ENCODE measurements at regions of chr13 and their contacts with region 1.

Region 1: DNA sequence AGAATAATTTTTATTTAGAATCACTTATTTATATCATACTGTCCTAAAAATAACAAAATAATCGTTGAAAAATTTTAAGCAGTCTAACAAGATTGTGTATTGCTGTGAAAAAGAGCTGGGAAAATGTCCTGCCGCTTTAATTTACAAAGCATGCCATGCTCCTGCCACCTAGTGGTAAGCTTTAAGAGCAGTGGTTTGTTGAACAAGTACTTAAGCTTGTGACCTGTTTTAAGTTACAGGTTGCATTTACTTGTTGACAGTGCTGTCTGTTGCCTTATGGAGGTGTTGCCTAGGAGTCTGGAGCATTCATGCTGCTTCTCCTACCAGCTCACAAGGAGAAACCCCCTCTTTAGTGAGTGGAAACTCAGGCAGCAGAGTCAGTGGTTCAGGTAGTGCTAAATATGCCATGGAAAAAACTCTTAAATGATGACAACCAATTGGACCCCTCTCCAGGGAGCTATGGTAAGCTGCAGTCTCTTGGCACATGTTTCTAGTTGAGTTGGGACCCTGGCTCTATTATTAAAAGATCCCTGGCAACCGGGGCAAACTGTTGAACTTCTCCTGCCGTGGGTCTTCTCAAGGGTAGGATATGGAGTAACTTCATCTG is 68.4 kb downstream of the SPATA13 start:
- DNase-seq: peak; percentile 69
- ATAC-seq: peak; percentile 66
- H3K4me3 Mint-ChIP-seq: no peak overlapping the region
- H3K27ac Mint-ChIP-seq: no peak overlapping the region
- H3K4me1 Mint-ChIP-seq: peaks cover 38% of the 10 kb centered on the region
- H3K27me3 Mint-ChIP-seq: no peaks in the 10 kb centered on the region

Region 2: DNA sequence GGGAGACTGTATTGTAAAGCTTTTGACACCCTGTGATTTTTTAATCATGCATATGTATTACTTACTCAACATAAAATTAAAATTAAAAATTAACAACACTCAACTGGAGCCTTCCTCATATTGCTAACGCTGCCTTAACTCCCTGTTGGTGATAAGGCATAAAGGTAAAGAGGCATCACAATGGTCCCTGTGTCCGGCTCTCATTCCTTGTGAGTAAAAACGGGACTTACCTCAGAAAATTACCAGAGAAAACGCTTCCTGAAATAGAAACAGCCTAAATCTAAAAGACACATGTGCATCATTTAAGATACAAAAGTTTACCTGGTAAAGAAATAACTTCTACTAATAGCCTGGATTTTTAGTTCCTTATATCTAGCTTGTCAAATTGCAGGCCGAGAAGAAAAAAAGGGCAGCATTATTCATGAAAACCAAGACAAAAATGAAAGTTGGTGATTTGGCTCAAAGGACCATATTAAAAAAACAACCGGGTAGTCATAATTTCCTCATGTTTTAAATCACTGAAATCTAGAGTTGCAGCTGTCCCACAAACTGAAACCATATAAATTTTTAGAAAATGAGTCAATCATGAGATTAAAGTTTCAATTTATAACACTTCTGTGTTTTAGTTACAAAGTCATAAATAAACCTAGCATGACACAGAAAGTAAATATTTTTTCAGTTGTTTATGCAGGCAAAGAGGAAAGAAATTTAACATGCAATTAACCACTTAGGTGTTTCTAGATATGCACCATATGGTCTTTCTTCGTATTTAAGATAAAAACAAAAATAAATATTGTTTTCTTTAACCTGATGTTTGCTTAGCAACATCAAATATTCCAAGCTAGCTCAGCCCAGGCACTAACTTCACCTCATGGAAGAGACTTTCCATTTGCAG is 434.4 kb before region 1 on chr13:
- CTCF ChIA-PET with region 1: no interaction called
- POLR2A ChIA-PET with region 1: no interaction called
- DNase-seq: no peak
- ATAC-seq: no peak
- H3K4me3 Mint-ChIP-seq: no peak overlapping the region
- H3K27ac Mint-ChIP-seq: no peak overlapping the region
- H3K4me1 Mint-ChIP-seq: no peaks in the 10 kb centered on the region
- H3K27me3 Mint-ChIP-seq: no peaks in the 10 kb centered on the region

Region 3: GRCh38 chr13:23856008-23856750 is 372.8 kb before region 1 on chr13:
- CTCF ChIA-PET with region 1: no interaction called
- POLR2A ChIA-PET with region 1: no interaction called
- DNase-seq: no peak
- ATAC-seq: no peak
- H3K4me3 Mint-ChIP-seq: no peak overlapping the region
- H3K27ac Mint-ChIP-seq: no peak overlapping the region
- H3K4me1 Mint-ChIP-seq: peaks cover 4% of the 10 kb centered on the region
- H3K27me3 Mint-ChIP-seq: no peaks in the 10 kb centered on the region

Region 4: DNA sequence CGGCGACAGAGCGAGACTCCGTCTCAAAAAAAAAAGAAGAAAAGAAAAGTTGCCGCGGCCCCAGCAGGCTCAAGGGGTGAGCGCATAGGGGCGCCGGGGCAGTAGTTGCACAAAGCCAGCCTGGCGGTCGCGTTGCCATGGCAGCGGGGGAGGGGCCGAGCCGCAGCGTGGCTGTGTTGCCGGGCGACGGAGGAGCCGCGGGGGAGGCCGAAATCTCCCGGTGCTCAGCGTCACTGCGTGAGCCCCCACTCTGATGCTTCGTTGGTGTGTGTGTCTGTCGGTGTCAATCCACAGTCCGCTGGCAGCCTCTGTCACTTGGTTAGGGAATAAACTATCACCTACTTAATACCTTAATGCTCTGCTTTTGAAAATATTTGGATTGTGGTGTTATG is 248.8 kb before region 1 on chr13:
- CTCF ChIA-PET with region 1: interaction called, 12 read pairs
- POLR2A ChIA-PET with region 1: interaction called, 3 read pairs
- DNase-seq: peak; percentile 92
- ATAC-seq: peak; percentile 91
- H3K4me3 Mint-ChIP-seq: peak overlapping the region; percentile 77
- H3K27ac Mint-ChIP-seq: peak overlapping the region; percentile 68
- H3K4me1 Mint-ChIP-seq: peaks cover 17% of the 10 kb centered on the region
- H3K27me3 Mint-ChIP-seq: peaks cover 30% of the 10 kb centered on the region

Region 5: GRCh38 chr13:24053519-24054251 is 175.3 kb before region 1 on chr13:
- CTCF ChIA-PET with region 1: interaction called, 52 read pairs
- POLR2A ChIA-PET with region 1: no interaction called
- DNase-seq: peak; percentile 78
- ATAC-seq: peak; percentile 95
- H3K4me3 Mint-ChIP-seq: no peak overlapping the region
- H3K27ac Mint-ChIP-seq: no peak overlapping the region
- H3K4me1 Mint-ChIP-seq: peaks cover 7% of the 10 kb centered on the region
- H3K27me3 Mint-ChIP-seq: peaks cover 4% of the 10 kb centered on the region

Region 6: GRCh38 chr13:24160454-24161009 is 68.4 kb before region 1 on chr13 and contains the start of gene SPATA13:
- CTCF ChIA-PET with region 1: interaction called, 12 read pairs
- POLR2A ChIA-PET with region 1: no interaction called
- DNase-seq: peak; percentile 94
- ATAC-seq: peak; percentile 92
- H3K4me3 Mint-ChIP-seq: peak within 1 kb of the TSS; percentile 88
- H3K27ac Mint-ChIP-seq: peak within 1 kb of the TSS; percentile 82
- H3K4me1 Mint-ChIP-seq: peaks cover 40% of the 10 kb centered on the region
- H3K27me3 Mint-ChIP-seq: peaks cover 3% of the 10 kb centered on the region
- total RNA-seq, gene SPATA13: 57.4 to 63.2 TPM

Region 7: DNA sequence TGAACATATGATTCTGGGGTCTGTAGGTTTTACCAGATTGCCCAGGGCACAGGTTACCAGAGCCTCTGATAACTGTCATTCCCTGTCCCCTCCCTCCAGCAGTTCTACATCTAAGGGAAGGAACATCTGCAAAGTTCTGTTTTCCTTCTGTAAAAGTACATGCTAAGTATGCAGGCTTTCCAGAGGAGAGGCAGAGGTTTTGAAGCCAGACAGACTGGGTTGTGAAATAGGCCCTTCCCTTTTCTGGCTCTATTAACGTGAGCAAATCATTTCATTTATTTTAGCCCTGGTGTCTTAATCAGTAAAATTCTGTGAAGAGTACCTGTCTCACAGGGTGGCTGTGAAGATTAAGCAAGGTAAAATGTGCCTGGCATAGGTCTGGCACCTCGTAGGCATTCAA is 14.3 kb after region 1 on chr13:
- CTCF ChIA-PET with region 1: interaction called, 16 read pairs
- POLR2A ChIA-PET with region 1: interaction called, 3 read pairs
- DNase-seq: no peak
- ATAC-seq: no peak
- H3K4me3 Mint-ChIP-seq: no peak overlapping the region
- H3K27ac Mint-ChIP-seq: no peak overlapping the region
- H3K4me1 Mint-ChIP-seq: peaks cover 5% of the 10 kb centered on the region
- H3K27me3 Mint-ChIP-seq: no peaks in the 10 kb centered on the region

Region 8: DNA sequence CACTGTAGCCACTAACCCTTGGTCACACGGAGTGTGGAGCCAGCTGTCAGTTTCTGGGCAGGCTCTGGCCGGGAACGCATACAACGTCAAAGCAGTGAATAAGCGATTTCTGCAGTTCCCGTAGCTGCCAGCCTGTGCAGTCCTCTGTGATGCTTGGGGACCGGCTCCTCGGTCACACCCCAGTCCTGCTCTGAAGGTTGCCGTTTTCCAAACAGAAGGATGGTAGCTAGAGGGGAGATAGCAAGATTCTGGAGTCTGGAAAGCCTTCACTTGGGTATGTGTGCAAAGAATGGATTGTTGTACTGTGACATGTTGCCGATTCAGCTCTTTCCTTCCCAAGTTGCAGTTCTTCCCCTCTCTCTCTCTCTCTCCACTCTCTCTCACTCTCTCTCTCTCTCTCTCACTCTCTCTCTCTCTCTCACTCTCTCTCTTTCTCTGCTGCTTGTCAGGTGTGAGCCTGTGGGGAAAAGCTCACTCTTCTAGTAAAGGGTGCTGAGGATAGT is 41.7 kb after region 1 on chr13:
- CTCF ChIA-PET with region 1: interaction called, 19 read pairs
- POLR2A ChIA-PET with region 1: interaction called, 5 read pairs
- DNase-seq: peak; percentile 74
- ATAC-seq: peak; percentile 52
- H3K4me3 Mint-ChIP-seq: peak overlapping the region; percentile 84
- H3K27ac Mint-ChIP-seq: peak overlapping the region; percentile 96
- H3K4me1 Mint-ChIP-seq: peaks cover 88% of the 10 kb centered on the region
- H3K27me3 Mint-ChIP-seq: no peaks in the 10 kb centered on the region

Region 9: DNA sequence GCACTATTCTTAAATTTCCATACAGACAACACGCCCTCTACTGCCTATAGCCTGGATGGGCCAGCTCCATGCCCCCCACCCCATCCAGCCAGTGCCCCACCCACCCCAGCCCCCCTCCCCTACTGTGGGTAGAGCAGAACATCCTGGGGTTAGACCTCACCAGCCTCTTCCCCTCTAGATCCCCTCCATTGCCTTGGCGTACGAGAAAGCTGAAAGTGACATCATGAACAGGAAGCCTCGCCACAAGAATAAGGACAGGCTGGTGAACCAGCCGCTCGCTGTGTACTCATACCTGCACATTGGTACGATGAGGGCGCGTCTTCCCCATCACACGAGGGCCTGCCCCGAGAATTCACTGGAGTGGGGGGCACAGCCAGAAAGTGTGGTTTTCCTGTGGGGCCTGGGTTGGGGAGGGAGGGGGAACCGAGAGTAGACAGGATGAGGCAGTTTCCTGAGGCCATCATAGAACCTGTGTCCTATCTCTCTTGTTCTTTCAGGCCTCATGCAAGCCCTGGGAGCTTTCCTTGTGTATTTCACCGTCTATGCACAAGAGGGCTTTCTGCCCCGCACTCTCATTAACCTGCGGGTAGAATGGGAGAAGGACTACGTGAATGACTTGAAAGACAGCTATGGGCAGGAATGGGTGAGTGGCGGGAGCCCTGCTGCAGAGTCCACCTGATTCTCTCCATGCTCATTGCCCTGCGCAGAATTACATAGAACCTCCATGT is 480.4 kb after region 1 on chr13:
- CTCF ChIA-PET with region 1: no interaction called
- POLR2A ChIA-PET with region 1: no interaction called
- DNase-seq: peak; percentile 86
- ATAC-seq: peak; percentile 97
- H3K4me3 Mint-ChIP-seq: peak overlapping the region; percentile 32
- H3K27ac Mint-ChIP-seq: peak overlapping the region; percentile 85
- H3K4me1 Mint-ChIP-seq: peaks cover 46% of the 10 kb centered on the region
- H3K27me3 Mint-ChIP-seq: peaks cover 10% of the 10 kb centered on the region

Measured in activated CD8-positive, alpha-beta T cell treated with anti-CD3 and anti-CD28 coated beads, Interleukin-2, amount 10 ng/mL, durations not matched to agents 7 days and 5 days (primary cell).